Naive thymus-derived CD4-positive, alpha-beta T cell (primary cell): ENCODE measurements at regions of chr19 and their contacts with region 1.

Region 1: GRCh38 chr19:6424939-6425731 is 524 bp upstream of the KHSRP start:
- DNase-seq: peak; percentile 66 to 100 (median 99)
- ATAC-seq: peak; percentile 89
- H3K4me3 ChIP-seq: peak overlapping the region; percentile 39
- H3K4me3 Mint-ChIP-seq: peak overlapping the region; percentile 69 to 87 (median 78)
- H3K27ac ChIP-seq: peak overlapping the region; percentile 77
- H3K27ac Mint-ChIP-seq: peak overlapping the region; percentile 78 to 97 (median 94)
- H3K4me1 ChIP-seq: peaks cover 15 to 32% of the 10 kb centered on the region in 2 donors
- H3K4me1 Mint-ChIP-seq: peaks cover 18 to 48% (median 41%) of the 10 kb centered on the region in 7 donors
- H3K27me3 ChIP-seq: no peaks in the 10 kb centered on the region
- H3K27me3 Mint-ChIP-seq: no peaks in the 10 kb centered on the region

Region 2: GRCh38 chr19:5680437-5681368 is 744.4 kb before region 1 on chr19 and contains the starts of genes HSD11B1L and MICOS13:
- CTCF ChIA-PET with region 1: no interaction called
- POLR2A ChIA-PET with region 1: no interaction called
- intact Hi-C with region 1: loop called in 1 of 2 experiments (anchors 1 kb)
- DNase-seq: peak; percentile 98 to 99 (median 99)
- ATAC-seq: peak; percentile 96
- H3K4me3 ChIP-seq: peak within 1 kb of the TSS; percentile 100
- H3K4me3 Mint-ChIP-seq: peak within 1 kb of the TSS; percentile 85 to 97 (median 94)
- H3K27ac ChIP-seq: peak within 1 kb of the TSS; percentile 98
- H3K27ac Mint-ChIP-seq: peak within 1 kb of the TSS; percentile 94 to 100 (median 97)
- H3K4me1 ChIP-seq: peaks cover 8 to 18% of the 10 kb centered on the region in 2 donors
- H3K4me1 Mint-ChIP-seq: peaks cover 20 to 33% (median 25%) of the 10 kb centered on the region in 7 donors
- H3K27me3 ChIP-seq: no peaks in the 10 kb centered on the region
- H3K27me3 Mint-ChIP-seq: peaks cover 0 to 18% (median 0%) of the 10 kb centered on the region in 5 donors
- total RNA-seq, gene HSD11B1L: 2.8 to 5.2 (median 3.6) TPM
- total RNA-seq, gene MICOS13: 26.1 to 49.3 (median 38.4) TPM

Region 3: DNA sequence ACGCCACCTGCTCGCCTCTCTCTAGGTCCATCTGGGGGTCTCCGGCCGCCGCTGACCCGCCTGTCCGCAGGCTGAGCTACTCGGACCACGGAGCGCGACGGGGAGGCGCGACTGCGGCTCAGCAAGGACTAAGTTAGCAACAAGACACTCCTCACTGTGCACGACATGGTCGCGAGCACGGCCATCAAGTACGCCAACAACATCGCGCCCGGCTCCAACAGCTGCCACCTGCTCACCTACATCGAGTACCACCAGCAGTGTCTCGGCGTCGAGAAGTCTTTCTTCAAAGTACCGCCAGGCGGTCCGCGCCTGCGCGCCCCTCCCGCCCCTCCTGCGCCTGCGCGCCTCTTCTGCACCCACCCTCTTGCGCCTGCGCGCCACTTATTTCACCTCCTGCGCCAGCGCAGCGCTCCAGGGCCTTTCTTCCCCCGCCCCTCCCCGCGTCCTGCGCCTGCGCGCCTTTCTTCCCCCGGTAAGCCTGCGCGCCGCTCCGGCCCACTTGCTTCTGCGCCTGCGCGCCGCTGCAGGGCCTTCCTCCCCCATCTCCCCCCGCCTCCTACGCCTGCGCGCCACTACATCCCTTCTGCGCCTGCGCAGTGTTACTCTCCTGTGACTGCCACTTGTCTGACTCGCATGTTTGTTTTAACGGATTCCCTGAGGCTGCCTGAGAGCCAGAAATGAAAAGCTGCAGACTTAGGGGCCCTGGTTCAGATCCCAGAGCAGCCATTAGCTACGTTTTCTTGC is 225.7 kb before region 1 on chr19:
- CTCF ChIA-PET with region 1: no interaction called
- POLR2A ChIA-PET with region 1: no interaction called
- intact Hi-C with region 1: loop called (anchors 1 kb)
- DNase-seq: peak; percentile 97 to 100 (median 99)
- ATAC-seq: peak; percentile 93
- H3K4me3 ChIP-seq: peak overlapping the region; percentile 97
- H3K4me3 Mint-ChIP-seq: peak overlapping the region; percentile 92 to 99 (median 95)
- H3K27ac ChIP-seq: peak overlapping the region; percentile 70
- H3K27ac Mint-ChIP-seq: peak overlapping the region; percentile 89 to 97 (median 91)
- H3K4me1 ChIP-seq: peaks cover 6% of the 10 kb centered on the region in 2 donors
- H3K4me1 Mint-ChIP-seq: peaks cover 5 to 20% (median 18%) of the 10 kb centered on the region in 7 donors
- H3K27me3 ChIP-seq: no peaks in the 10 kb centered on the region
- H3K27me3 Mint-ChIP-seq: peaks cover 0 to 8% (median 4%) of the 10 kb centered on the region in 5 donors

Region 4: GRCh38 chr19:6239401-6239844 is 185.7 kb before region 1 on chr19:
- CTCF ChIA-PET with region 1: no interaction called
- POLR2A ChIA-PET with region 1: no interaction called
- intact Hi-C with region 1: no loop called
- DNase-seq: no peak
- ATAC-seq: no peak
- H3K4me3 ChIP-seq: no peak overlapping the region
- H3K4me3 Mint-ChIP-seq: peak overlapping the region in 1 of 10 donors; percentile 13
- H3K27ac ChIP-seq: no peak overlapping the region
- H3K27ac Mint-ChIP-seq: peak overlapping the region in 4 of 9 donors; percentile 0 to 73 (median 12)
- H3K4me1 ChIP-seq: peaks cover 5 to 8% of the 10 kb centered on the region in 2 donors
- H3K4me1 Mint-ChIP-seq: peaks cover 25 to 65% (median 47%) of the 10 kb centered on the region in 7 donors
- H3K27me3 ChIP-seq: no peaks in the 10 kb centered on the region
- H3K27me3 Mint-ChIP-seq: no peaks in the 10 kb centered on the region

Region 5: GRCh38 chr19:6279931-6280591 is 145.1 kb before region 1 on chr19 and contains the start of gene MLLT1:
- CTCF ChIA-PET with region 1: no interaction called
- POLR2A ChIA-PET with region 1: no interaction called
- intact Hi-C with region 1: loop called (anchors 1 kb)
- DNase-seq: peak; percentile 88 to 98 (median 90)
- ATAC-seq: peak; percentile 96
- H3K4me3 ChIP-seq: peak within 1 kb of the TSS; percentile 54
- H3K4me3 Mint-ChIP-seq: peak within 1 kb of the TSS; percentile 85 to 97 (median 92)
- H3K27ac ChIP-seq: peak within 1 kb of the TSS; percentile 78
- H3K27ac Mint-ChIP-seq: peak within 1 kb of the TSS; percentile 87 to 95 (median 93)
- H3K4me1 ChIP-seq: peaks cover 3 to 20% of the 10 kb centered on the region in 2 donors
- H3K4me1 Mint-ChIP-seq: peaks cover 30 to 42% (median 39%) of the 10 kb centered on the region in 7 donors
- H3K27me3 ChIP-seq: no peaks in the 10 kb centered on the region
- H3K27me3 Mint-ChIP-seq: peaks cover 0 to 6% (median 0%) of the 10 kb centered on the region in 5 donors
- total RNA-seq, gene MLLT1: 33.3 to 47.5 (median 39.0) TPM

Region 6: DNA sequence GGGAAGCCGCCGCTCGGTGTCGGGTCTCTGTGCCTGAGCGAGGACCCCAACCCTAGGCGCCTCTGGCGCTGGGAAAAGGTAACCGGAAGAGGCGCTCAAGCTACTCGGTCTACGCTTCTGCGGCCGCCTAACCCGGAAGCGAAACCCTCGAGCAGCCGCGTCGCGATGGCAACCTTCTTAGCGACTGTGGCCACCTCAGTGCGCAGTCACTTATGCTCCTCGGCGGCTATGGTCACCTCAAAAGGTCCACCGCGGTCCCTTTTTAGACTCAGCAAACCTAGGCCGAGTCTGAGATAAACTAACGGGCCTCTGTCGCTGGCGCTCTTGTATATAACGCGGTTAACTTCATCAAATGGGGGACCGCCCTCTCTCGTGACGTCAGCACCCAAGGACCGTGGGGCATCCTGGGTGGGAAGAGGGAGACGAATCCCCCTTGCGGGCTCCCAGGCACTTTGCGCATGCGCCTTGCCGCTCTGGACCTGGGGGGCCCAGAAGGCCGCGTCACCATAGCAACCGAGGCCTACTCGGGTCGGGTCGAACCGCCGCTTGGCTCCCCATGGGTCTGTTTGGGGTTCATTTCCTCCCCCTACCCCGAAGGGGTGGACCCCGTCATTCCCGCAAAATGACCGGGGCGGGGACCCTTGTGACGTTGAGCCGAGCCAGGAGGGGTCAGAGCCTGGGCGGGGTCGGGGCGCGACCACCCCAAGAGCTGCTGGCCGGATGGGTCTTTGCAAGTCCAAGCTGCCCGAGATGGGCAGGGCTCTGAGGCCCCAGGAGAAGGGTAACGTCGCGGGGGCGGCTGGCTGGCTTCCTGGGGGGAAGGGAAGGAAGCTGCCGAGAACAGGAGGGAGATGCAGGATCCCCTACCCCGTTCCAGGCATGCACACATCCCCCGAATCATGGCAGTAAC is 31.8 kb before region 1 on chr19 and contains the start of gene GTF2F1:
- CTCF ChIA-PET with region 1: no interaction called
- POLR2A ChIA-PET with region 1: interaction called, 4 read pairs
- intact Hi-C with region 1: loop called (anchors 1 kb)
- DNase-seq: peak; percentile 87 to 96 (median 92)
- ATAC-seq: peak; percentile 88
- H3K4me3 ChIP-seq: peak within 1 kb of the TSS; percentile 81
- H3K4me3 Mint-ChIP-seq: peak within 1 kb of the TSS; percentile 90 to 95 (median 94)
- H3K27ac ChIP-seq: peak within 1 kb of the TSS; percentile 98
- H3K27ac Mint-ChIP-seq: peak within 1 kb of the TSS; percentile 95 to 99 (median 97)
- H3K4me1 ChIP-seq: peaks cover 8 to 12% of the 10 kb centered on the region in 2 donors
- H3K4me1 Mint-ChIP-seq: peaks cover 20 to 27% (median 25%) of the 10 kb centered on the region in 7 donors
- H3K27me3 ChIP-seq: no peaks in the 10 kb centered on the region
- H3K27me3 Mint-ChIP-seq: no peaks in the 10 kb centered on the region
- total RNA-seq, gene GTF2F1: 51.5 to 71.6 (median 61.3) TPM

Region 7: DNA sequence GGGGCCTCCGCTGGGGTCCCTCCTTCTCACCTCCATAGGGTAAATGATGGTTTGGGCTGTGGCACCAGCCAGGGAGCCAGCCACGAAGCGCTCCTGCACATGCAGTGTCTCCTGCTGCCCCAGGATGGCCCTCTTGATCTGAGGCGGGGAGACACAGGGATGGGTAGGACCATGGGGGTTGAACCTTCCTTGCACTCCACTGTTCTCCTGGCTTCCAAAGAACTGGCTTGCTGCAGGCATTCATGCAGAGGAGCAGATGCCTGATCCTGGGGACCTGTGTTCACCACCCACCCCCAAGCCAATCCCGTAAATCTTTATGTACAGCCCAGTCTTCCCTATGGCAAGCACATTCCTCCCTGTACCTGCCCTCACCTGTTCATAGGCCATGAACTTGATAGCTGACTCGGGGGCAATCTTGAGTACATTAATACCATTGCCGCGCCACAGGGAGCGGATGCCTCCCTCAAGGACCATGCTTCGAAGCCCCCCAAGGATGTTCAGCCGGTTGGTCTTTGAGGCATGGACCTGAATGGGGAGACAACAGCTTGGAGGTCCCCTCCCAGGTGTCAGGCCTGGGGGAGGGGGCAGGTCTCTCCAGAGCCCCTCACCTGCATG is 28.9 kb after region 1 on chr19:
- CTCF ChIA-PET with region 1: no interaction called
- POLR2A ChIA-PET with region 1: no interaction called
- intact Hi-C with region 1: no loop called
- DNase-seq: peak in 1 of 9 donors; percentile 12
- ATAC-seq: no peak
- H3K4me3 ChIP-seq: no peak overlapping the region
- H3K4me3 Mint-ChIP-seq: no peak overlapping the region
- H3K27ac ChIP-seq: no peak overlapping the region
- H3K27ac Mint-ChIP-seq: no peak overlapping the region
- H3K4me1 ChIP-seq: no peaks in the 10 kb centered on the region
- H3K4me1 Mint-ChIP-seq: peaks cover 5 to 12% (median 8%) of the 10 kb centered on the region in 7 donors
- H3K27me3 ChIP-seq: no peaks in the 10 kb centered on the region
- H3K27me3 Mint-ChIP-seq: no peaks in the 10 kb centered on the region

Region 8: DNA sequence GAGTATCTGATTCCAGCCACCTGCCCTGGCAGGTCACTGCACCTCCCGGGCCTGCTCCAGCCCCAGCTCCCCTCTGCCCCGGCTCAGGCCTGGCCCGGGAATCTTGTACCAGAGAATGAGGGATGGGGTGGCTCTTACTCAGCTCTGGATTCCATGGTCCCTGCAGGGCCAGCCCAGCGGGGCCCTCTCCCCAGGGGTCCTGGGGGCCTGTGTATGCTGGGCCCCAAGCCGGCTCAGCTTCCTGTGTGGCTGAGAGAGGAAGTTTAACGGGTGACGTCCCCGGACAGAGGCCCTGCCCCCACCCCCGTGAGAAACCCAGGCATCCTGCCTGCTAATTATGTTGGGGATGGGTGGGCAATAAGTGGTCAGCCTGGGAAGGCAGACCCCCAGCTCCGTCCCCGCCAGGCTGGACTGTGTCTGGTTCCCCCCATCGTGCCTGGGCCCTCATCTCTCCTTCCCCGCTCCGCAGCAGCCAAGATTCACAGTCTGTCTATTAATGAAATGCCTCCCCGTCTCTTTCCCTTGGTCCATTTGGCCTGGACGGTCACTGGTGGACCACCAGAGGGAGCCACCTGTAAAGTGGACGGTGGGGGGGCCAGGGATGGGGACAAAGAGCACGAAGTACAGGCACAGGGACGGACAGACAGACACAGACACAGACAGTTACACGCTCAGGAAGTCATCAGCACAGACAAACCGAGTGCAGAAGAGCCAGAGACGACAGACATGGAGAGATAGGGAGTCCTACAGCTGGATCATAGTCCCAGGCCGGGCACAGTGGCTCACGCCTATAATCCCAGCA is 56.6 kb after region 1 on chr19 and contains the start of gene DENND1C:
- CTCF ChIA-PET with region 1: no interaction called
- POLR2A ChIA-PET with region 1: interaction called, 9 read pairs
- intact Hi-C with region 1: loop called (anchors 1 to 10 kb)
- DNase-seq: peak; percentile 52 to 67 (median 67)
- ATAC-seq: peak; percentile 91
- H3K4me3 ChIP-seq: peak within 1 kb of the TSS; percentile 95
- H3K4me3 Mint-ChIP-seq: peak within 1 kb of the TSS; percentile 88 to 100 (median 96)
- H3K27ac ChIP-seq: peak within 1 kb of the TSS; percentile 94
- H3K27ac Mint-ChIP-seq: peak within 1 kb of the TSS; percentile 93 to 99 (median 96)
- H3K4me1 ChIP-seq: peaks cover 26 to 27% of the 10 kb centered on the region in 2 donors
- H3K4me1 Mint-ChIP-seq: peaks cover 30 to 46% (median 40%) of the 10 kb centered on the region in 7 donors
- H3K27me3 ChIP-seq: no peaks in the 10 kb centered on the region
- H3K27me3 Mint-ChIP-seq: no peaks in the 10 kb centered on the region
- total RNA-seq, gene DENND1C: 106 to 142 (median 118) TPM